ENCODE measurements at regions of chr16 and their contacts with region 1.

Region 1: DNA sequence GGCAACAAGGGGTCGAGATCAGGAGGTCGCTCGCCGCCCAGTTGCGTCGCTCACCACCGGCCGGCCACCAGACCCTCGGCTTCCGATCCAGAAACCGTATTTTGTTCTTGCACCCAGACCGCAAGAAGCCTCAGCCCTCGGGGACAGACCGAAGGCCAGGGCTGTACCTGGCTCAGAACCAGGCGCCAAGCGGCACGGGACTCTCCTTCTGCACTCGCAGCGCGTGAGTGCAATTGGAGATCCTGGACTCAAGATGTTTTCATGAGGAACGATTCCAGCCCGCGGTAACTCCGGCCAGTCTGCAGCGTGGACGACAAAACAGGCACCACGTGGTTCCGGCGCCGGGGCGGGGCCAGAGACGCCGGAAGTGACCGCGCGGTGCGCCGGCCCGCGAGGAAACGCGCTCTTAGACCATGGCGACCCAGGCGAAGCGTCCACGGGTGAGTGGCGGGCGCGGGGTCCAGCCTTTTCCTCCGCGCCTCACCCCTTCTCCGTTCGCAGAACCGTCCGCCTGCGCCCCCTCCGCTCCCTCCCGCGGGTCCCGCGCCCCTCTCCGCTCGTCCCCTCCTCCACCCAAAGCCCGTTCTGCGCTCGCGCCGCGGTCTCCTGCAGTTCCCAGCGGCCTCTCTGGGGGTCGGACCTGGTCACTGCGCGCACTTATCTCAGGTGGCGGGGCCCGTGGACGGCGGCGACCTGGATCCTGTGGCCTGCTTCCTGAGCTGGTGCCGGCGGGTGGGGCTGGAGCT is at the start of gene SETD6:
- DNase-seq: peak; percentile 92 to 96
- H3K4me3 ChIP-seq: peak within 1 kb of the TSS; percentile 86 to 96
- H3K27ac ChIP-seq: peak within 1 kb of the TSS; percentile 42
- H3K4me1 ChIP-seq: peaks cover 20% of the 10 kb centered on the region
- H3K27me3 ChIP-seq: no peaks in the 10 kb centered on the region
- CTCF ChIP-seq: no peak
- POLR2A ChIP-seq: peak in 1 of 2 donors; percentile 9
- total RNA-seq, gene SETD6: 79.1 TPM

Region 2: GRCh38 chr16:58487566-58488351 is 27.5 kb before region 1 on chr16:
- intact Hi-C with region 1: no loop called
- DNase-seq: no peak
- H3K4me3 ChIP-seq: peak overlapping the region; percentile 15 to 28
- H3K27ac ChIP-seq: no peak overlapping the region
- H3K4me1 ChIP-seq: peaks cover 6% of the 10 kb centered on the region
- H3K27me3 ChIP-seq: no peaks in the 10 kb centered on the region
- CTCF ChIP-seq: peak; percentile 85 to 92 (median 87)
- POLR2A ChIP-seq: no peak

Region 3: DNA sequence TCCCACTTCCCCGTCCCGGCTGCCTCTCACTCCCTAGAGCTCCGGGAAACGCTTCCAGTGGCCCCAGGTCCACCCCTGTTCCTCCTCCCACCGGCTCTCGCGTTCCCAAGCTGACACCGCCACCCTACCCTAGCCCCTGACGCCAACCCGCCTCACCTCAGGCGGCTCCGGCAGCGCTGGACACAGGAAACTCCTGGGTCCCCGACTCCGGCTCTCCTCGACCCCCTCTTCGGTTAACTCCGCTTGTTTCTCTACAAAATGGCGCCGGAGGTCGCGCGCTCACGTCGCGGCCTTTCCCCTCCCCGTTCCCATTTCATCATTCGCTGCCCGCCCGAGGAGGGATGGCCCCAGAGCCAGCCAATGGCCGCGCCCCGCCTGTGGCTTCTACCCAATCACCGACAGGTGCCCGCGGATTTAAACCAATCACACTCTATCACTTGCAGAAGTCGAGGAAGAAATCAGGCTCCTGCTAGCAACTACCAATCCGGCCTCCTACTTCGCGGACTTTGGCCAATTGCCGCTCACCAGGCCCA is 114.3 kb after region 1 on chr16 and contains the start of gene CNOT1:
- intact Hi-C with region 1: loop called (anchors 10 kb)
- DNase-seq: peak; percentile 99 to 100
- H3K4me3 ChIP-seq: peak within 1 kb of the TSS; percentile 85 to 98
- H3K27ac ChIP-seq: peak within 1 kb of the TSS; percentile 99
- H3K4me1 ChIP-seq: peaks cover 41% of the 10 kb centered on the region
- H3K27me3 ChIP-seq: no peaks in the 10 kb centered on the region
- CTCF ChIP-seq: no peak
- POLR2A ChIP-seq: peak; percentile 24 to 78
- total RNA-seq, gene CNOT1: 115 TPM

Region 4: DNA sequence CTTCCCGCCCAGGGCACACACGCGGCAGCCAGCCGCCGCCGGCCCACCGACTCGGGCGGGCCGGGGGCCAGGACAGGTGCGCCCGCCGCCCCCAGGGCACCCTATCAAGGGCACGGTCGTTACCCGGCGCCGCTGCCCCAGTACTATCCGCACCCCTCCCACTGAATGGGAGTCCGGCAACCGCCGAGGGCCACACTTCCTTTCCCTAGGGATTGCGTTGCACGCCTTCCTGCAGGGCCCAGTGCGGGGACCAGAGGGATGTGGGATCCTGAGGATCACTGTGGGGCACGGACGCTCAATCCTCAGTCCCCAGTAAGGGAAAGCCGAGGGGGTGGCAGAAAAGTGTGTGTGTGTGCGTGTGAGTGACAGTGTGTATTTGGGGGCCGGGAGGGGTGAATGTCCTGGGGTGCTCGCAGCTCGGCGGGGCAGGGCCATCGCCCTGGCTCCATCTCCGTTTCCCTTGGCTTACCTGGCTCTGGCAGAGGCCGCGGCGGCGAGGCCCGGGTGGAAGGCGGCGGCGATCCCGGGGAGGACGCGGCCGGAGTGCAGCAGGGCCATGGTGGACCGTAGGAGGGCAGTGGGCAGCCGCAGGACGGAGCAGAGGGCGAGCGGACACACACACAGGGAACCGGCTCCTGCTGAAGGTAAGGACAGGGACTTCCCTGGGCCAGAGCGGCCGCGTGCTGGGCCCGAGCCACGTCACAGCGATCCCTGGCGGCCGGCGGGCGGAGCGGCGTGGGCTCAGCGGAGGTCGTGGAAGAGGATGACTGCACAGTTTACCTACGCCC is 218.6 kb after region 1 on chr16 and contains the start of gene GOT2:
- intact Hi-C with region 1: loop called (anchors 10 kb)
- DNase-seq: no peak
- H3K4me3 ChIP-seq: peak within 1 kb of the TSS; percentile 68 to 77
- H3K27ac ChIP-seq: peak within 1 kb of the TSS; percentile 34
- H3K4me1 ChIP-seq: peaks cover 25% of the 10 kb centered on the region
- H3K27me3 ChIP-seq: no peaks in the 10 kb centered on the region
- CTCF ChIP-seq: peak; percentile 46 to 84 (median 65)
- POLR2A ChIP-seq: no peak
- total RNA-seq, gene GOT2: 57.5 TPM

Measured in vagina (tissue), 2 donors.